ENCODE measurements at regions of chr1 and their contacts with region 1.

Region 1: DNA sequence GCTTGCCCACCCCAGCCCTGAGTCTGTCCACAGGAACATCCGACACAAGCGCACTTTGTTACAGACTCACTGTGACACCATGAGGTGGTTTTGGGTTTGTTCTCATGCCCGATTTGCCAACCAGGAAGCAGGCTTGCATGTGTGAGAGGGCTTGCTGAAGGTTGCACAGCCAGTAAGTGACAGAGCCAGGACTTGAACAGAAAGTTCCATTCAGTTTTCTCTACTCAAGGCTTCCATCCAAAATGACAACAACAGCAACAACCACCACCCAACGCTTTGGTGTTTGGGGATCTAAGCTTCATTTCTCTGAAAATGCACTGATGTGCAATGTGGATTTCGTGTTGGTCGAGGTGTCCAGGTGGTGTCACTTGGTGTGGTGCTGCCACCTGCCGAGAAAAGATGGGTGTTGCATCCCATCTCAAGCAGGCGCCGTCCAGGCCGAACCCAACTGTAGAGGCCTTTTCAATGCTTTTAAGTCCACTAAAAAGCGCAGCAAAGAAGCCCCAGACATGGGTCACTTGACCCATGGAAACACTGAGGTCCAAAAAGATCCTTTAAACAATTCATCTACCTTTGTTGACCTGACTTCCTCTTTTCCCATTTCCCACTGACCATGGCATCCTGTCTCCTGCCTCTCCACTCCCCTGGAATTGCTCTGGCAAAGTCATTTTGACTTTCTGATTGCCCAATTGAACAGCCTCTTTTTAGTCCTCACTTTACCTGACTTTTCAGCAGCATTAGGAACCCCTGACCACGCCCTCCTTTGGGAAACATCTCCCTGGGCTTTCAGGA is 12.2 kb downstream of the CITED4 start:
- DNase-seq: peak; percentile 67 to 87 (median 78)
- H3K4me3 ChIP-seq: no peak overlapping the region
- H3K27ac ChIP-seq: no peak overlapping the region
- H3K4me1 ChIP-seq: no peaks in the 10 kb centered on the region
- H3K27me3 ChIP-seq: no peaks in the 10 kb centered on the region
- CTCF ChIP-seq: peak; percentile 94

Region 2: GRCh38 chr1:40612345-40612831 is 237.6 kb before region 1 on chr1:
- intact Hi-C with region 1: loop called (anchors 10 kb)
- DNase-seq: peak in 4 of 5 donors; percentile 60 to 83 (median 73)
- H3K4me3 ChIP-seq: peak overlapping the region in 1 of 3 donors; percentile 22
- H3K27ac ChIP-seq: no peak overlapping the region
- H3K4me1 ChIP-seq: no peaks in the 10 kb centered on the region
- H3K27me3 ChIP-seq: no peaks in the 10 kb centered on the region
- CTCF ChIP-seq: peak; percentile 90

Region 3: GRCh38 chr1:40951943-40952743 is 102.1 kb after region 1 on chr1:
- intact Hi-C with region 1: loop called (anchors 10 kb)
- DNase-seq: peak; percentile 73 to 87 (median 81)
- H3K4me3 ChIP-seq: no peak overlapping the region
- H3K27ac ChIP-seq: no peak overlapping the region
- H3K4me1 ChIP-seq: peaks cover 0 to 2% (median 0%) of the 10 kb centered on the region in 3 donors
- H3K27me3 ChIP-seq: no peaks in the 10 kb centered on the region
- CTCF ChIP-seq: peak; percentile 94

Measured in kidney (tissue), 22 donors.